ENCODE measurements at regions of chr6 and their contacts with region 1.

Region 1: DNA sequence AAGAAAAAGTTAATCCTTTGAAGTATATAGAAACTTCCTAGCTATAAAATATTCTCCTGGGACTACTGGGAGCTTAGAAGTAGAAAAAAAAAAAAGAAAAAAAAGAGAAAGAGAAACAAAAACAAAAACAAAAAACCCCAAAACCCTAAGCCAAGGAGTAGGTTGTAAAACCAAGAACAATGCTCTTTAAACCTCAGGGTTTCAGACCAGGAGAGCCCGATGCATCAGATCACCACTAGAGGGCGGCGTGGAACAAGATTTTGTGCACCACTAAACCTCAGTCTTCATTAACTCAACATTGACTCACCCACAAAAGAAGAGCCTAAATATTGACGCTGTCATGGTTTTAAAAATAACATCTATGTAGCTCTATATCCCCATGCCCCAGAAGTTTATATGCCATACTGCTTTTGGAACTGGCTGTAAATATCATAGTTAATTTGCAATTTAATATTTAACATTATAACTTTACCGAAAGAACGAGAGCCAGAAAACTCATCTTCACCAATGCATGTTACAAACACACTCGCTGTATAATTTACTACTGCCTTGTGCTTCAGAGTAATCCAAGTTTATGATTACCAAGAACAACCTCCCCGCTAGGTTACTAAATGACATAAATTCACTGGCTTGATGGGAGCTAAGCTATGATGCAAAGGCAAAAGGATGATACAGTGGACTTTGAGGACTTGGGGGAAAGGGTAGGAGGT is 19.2 kb downstream of the MCUR1 start:
- DNase-seq: peak; percentile 75
- H3K4me3 Mint-ChIP-seq: peak overlapping the region; percentile 5
- H3K27ac Mint-ChIP-seq: peak overlapping the region; percentile 40
- H3K4me1 Mint-ChIP-seq: peaks cover 21% of the 10 kb centered on the region
- H3K27me3 Mint-ChIP-seq: no peaks in the 10 kb centered on the region

Region 2: GRCh38 chr6:13614926-13615798 is 180.0 kb before region 1 on chr6 and contains the start of gene NOL7:
- intact Hi-C with region 1: loop called (anchors 1 kb)
- DNase-seq: peak; percentile 98
- H3K4me3 Mint-ChIP-seq: peak within 1 kb of the TSS; percentile 99
- H3K27ac Mint-ChIP-seq: peak within 1 kb of the TSS; percentile 87
- H3K4me1 Mint-ChIP-seq: peaks cover 54% of the 10 kb centered on the region
- H3K27me3 Mint-ChIP-seq: no peaks in the 10 kb centered on the region
- total RNA-seq, gene NOL7: 97.7 and 100 TPM in 2 replicates

Region 3: DNA sequence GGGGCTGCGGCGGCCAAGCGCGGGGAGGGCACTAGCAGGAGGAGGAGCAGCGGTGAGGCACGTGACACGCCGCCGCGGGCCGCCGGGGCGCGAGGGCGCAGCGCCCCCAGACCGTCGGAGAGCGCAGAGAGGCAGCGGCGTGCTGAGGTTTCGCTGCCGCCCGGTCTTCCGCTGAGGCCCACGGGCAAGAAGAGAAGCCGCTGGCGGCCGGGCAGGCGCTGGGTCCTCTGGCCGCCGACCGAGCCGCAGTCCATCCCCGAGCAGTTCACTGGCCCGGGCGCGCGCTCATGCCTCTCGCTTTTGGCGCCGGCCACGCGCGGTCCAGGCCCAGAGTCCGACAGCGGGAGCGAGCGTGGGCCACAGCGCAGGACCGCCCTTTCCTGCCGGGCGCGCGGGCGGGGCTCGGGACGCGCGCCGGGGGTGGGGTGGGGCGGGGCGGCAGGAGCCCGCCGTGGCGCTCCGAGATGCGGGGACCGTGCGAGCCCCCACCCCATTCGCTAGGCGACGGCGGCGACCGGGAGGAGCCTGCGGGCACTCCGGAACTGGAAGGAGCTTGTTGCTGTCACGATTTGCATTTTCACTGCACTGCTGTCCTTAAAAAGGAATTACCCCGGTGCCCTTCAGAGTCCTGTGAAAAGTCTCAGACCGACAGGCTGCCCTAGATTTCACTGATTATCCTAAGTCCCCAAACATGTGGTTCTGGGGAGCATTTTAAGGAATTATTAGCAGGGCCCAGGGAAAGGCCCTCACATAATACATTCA is 19.2 kb after region 1 on chr6 and contains the start of gene MCUR1:
- intact Hi-C with region 1: loop called (anchors 1 kb)
- DNase-seq: peak; percentile 80
- H3K4me3 Mint-ChIP-seq: peak within 1 kb of the TSS; percentile 85
- H3K27ac Mint-ChIP-seq: peak within 1 kb of the TSS; percentile 52
- H3K4me1 Mint-ChIP-seq: peaks cover 38% of the 10 kb centered on the region
- H3K27me3 Mint-ChIP-seq: peaks cover 2% of the 10 kb centered on the region
- total RNA-seq, gene MCUR1: 37.8 and 40.2 TPM in 2 replicates

Region 4: DNA sequence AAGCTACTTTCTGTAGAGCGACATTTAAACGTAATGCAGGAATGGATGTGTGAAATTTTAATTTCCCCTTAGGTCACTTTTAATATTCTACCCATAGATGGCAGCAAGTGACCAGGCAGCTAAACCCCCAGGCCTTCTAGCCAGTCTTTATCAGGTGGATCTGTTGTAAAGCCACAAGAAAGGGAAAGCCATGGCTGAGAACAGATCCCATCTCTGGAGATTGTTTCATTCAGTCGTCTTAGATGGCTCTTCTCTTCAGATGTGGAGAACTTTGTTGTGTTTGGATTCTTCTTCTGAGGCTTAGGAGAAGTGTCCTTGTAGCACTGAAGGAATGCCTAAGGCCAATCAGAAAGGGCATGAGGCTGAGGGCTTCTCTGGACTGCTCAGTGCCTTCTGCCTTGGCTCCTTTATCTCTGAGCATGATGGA is 113.8 kb after region 1 on chr6:
- intact Hi-C with region 1: loop called (anchors 1 kb)
- DNase-seq: peak; percentile 10
- H3K4me3 Mint-ChIP-seq: no peak overlapping the region
- H3K27ac Mint-ChIP-seq: no peak overlapping the region
- H3K4me1 Mint-ChIP-seq: no peaks in the 10 kb centered on the region
- H3K27me3 Mint-ChIP-seq: peaks cover 35% of the 10 kb centered on the region

Region 5: DNA sequence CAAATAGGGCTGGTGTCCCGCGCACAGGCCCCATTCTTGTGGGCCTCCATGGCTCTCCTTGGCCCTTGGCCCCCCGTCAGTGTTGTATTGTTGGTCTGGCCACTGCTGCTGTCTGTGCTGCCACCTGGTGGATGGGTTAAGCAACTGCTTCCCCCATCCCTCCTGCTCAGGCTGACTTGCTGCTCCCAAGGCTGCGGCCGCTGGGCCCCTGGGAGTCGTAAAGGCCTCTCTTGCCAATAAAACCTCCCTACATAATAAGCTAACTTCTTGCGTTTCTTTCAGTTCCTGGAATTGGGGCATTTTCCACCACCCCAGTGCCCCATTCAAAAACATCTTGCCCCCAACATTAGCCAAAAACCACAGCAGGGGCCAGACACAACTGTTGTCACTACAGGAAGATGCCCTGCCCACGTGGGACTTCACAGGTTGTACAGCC is 349.5 kb after region 1 on chr6:
- intact Hi-C with region 1: loop called (anchors 2 kb)
- DNase-seq: peak; percentile 48
- H3K4me3 Mint-ChIP-seq: no peak overlapping the region
- H3K27ac Mint-ChIP-seq: no peak overlapping the region
- H3K4me1 Mint-ChIP-seq: peaks cover 12% of the 10 kb centered on the region
- H3K27me3 Mint-ChIP-seq: peaks cover 3% of the 10 kb centered on the region